Activated CD4-positive, alpha-beta T cell treated with anti-CD3 and anti-CD28 coated beads for 36 hours (primary cell): ENCODE measurements at regions of chr17 and their contacts with region 1.

Region 1: DNA sequence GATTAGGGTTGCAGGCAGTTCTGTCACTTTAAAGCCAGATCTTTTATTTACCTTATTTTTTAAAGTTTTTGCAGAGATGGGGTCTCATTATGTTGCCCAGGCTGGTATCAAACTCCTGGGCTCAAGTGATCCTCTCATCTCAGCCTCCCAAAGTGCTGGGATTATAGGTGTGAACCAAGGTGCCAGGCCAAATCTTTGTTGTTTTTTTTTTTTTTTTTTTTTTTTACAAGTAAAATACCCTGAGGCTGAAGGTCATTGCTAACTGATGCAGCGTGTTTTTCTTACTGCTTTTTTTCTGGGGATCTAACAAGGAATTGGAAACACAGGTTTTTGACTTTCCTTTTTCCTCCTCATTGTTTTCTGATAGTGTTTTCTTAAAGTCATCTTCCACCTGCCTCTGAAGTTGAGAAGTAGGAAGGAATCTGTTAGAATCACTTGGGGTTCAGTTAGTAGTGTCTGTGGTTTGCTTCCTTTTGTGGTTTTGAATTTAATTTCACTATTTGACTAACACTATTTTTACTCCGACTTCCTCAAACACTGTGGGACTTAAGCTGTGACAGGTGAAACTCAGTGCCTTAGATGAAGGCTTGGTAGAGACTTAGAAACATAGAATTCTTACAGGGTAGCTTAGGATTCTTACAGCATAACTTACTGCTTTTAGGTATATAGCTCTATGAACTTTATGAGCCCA is 22.2 kb downstream of the CLTC start:
- DNase-seq: no peak
- ATAC-seq: peak; percentile 96
- H3K4me3 Mint-ChIP-seq: peak overlapping the region; percentile 1
- H3K27ac Mint-ChIP-seq: peak overlapping the region; percentile 68
- H3K4me1 Mint-ChIP-seq: peaks cover 57% of the 10 kb centered on the region
- H3K27me3 Mint-ChIP-seq: no peaks in the 10 kb centered on the region

Region 2: DNA sequence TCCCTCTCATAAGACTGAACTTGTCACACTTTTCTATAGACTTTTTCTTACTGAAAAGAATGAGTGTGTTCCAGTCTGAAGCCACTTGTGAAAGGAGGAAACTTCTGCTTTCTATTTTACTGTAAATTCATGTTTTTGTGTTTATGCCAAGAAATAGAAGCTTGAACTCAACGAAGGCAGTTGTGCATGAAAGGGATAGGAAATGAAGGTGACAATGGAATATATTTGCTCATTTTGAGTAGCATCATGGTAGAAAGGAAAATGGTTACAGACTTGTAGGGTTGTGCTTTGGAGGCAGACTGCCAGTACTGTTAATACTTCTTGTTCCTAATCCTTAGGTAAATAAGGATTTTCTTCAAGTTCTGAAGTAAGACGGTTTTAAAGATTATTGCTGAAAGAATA is 14.2 kb before region 1 on chr17:
- CTCF ChIA-PET with region 1: interaction called, 6 read pairs
- POLR2A ChIA-PET with region 1: interaction called, 3 read pairs
- intact Hi-C with region 1: loop called in 1 of 2 experiments (anchors 2 kb)
- DNase-seq: no peak
- ATAC-seq: peak; percentile 70
- H3K4me3 Mint-ChIP-seq: no peak overlapping the region
- H3K27ac Mint-ChIP-seq: no peak overlapping the region
- H3K4me1 Mint-ChIP-seq: peaks cover 73% of the 10 kb centered on the region
- H3K27me3 Mint-ChIP-seq: no peaks in the 10 kb centered on the region